A549 (cell line): ENCODE measurements at regions of chr2 and their contacts with region 1.

Region 1: GRCh38 chr2:128062571-128062970 is 28.4 kb upstream of the UGGT1 start:
- DNase-seq: no peak
- ATAC-seq: no peak
- H3K4me3 ChIP-seq: no peak overlapping the region
- H3K27ac ChIP-seq: no peak overlapping the region
- H3K4me1 ChIP-seq: no peaks in the 10 kb centered on the region
- CTCF ChIP-seq: no peak
- EP300 ChIP-seq: no peak
- POLR2A ChIP-seq: no peak
- RAD21 ChIP-seq: no peak

Region 2: GRCh38 chr2:128076461-128077106 is 14.0 kb after region 1 on chr2:
- CTCF ChIA-PET with region 1: interaction called, 27 read pairs
- POLR2A ChIA-PET with region 1: no interaction called
- DNase-seq: no peak
- ATAC-seq: peak in 1 of 2 experiments; percentile 47; a peak in 2 of 6 replicates
- H3K4me3 ChIP-seq: no peak overlapping the region
- H3K27ac ChIP-seq: no peak overlapping the region
- H3K4me1 ChIP-seq: no peaks in the 10 kb centered on the region
- CTCF ChIP-seq: no peak
- EP300 ChIP-seq: no peak
- POLR2A ChIP-seq: no peak
- RAD21 ChIP-seq: no peak

Region 3: DNA sequence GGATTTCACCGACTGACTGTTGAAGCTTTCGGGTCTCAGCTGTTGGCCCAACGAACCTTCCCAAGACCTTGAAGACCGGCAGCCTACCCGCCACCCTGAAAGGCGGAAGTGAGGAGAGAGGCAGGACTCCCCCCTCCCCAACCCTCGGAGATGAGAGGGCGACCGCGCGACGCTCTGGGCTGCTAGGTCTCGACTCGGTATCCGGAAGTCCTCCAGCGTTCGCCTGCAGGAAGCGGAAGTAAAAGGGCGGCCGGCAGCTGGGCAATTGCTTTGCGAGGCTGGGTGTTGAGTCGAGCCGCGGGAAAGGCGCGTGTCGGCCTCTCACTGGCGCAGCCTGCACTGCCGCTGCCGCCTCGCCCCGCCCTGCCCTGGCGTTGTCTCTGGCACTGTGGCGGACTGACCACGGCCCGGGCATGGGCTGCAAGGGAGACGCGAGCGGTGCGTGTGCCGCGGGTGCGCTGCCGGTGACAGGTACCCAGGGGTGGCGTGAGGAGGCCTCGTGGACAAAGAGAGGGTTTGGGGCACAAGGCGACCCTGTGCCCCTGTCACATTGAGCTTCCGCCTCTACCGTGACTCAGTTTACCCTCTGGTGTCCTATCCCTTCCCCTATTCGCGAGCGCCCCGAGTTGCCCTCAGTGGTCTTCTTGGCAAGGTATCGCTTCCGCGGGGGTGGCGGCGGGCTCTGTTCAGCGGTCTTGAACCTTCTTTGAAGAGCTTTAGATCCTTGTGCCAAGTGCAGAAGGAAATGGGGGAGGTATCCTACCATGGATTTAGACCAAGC is 28.6 kb after region 1 on chr2 and contains the start of gene UGGT1:
- CTCF ChIA-PET with region 1: interaction called, 18 read pairs
- POLR2A ChIA-PET with region 1: interaction called, 3 read pairs
- DNase-seq: peak; percentile 83 to 99
- ATAC-seq: peak; percentile 98 to 99
- H3K4me3 ChIP-seq: peak within 1 kb of the TSS; percentile 63
- H3K27ac ChIP-seq: peak within 1 kb of the TSS; percentile 89 to 90
- H3K4me1 ChIP-seq: peaks cover 13% of the 10 kb centered on the region; the same call in 2 of the 3 replicates
- CTCF ChIP-seq: no peak
- EP300 ChIP-seq: no peak
- POLR2A ChIP-seq: peak; percentile 76
- RAD21 ChIP-seq: no peak
- polyA plus RNA-seq, gene UGGT1: 52.2 and 56.4 TPM in 2 replicates

Region 4: DNA sequence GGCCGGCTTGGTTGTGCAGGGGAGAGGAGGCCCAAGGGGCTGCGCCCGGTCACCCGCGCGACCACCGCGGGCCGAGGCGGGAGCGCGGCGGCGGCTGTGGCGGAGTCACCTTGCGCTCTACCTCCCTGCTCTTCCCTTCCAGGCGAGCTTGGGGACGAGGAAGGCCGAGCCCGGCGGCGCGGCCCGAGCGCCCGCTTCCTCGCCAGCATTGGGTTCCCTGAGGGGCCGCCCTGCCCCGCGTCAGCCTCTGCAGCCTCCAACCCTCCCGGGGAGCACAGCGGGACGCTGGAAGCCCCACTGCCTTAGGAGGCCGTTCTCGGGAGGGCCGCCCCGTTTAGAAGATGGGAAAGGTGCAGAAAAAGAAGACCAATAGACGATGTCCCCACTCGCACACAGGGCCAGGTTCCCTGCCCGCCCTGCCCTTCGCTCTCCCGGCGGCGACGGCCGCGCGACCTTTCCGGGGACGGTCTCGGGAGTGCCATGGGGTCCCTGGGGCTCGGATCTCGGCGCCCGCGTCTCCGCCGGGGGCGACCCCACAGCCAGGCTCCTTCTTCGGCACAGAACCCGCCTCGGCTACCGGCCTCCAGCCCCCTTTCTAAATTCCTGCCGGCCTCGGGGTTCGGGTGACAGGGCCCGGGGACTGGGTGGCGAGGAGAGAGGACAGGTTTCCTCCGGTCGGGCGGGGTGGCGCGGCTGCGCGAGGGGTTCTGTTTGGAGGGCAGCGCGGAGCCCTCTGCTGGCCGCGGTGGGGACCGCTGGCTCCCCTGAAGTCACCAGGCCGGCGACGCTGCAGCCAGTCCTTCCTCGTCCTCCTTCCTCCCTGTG is 170.6 kb after region 1 on chr2:
- CTCF ChIA-PET with region 1: interaction called, 35 read pairs
- POLR2A ChIA-PET with region 1: no interaction called
- DNase-seq: peak; percentile 82 to 89
- ATAC-seq: peak; percentile 96 to 97
- H3K4me3 ChIP-seq: peak overlapping the region; percentile 68
- H3K27ac ChIP-seq: peak overlapping the region; percentile 72 to 84
- H3K4me1 ChIP-seq: 0 out of 3 replicates have a peak, but pooled peaks cover 4% of the 10 kb centered on the region
- CTCF ChIP-seq: peak; percentile 68
- EP300 ChIP-seq: no peak
- POLR2A ChIP-seq: 0 out of 2 replicates have a peak, but pooled peaks have one; percentile 13
- RAD21 ChIP-seq: peak; percentile 54 to 66

Region 5: GRCh38 chr2:128305159-128306087 is 242.9 kb after region 1 on chr2:
- CTCF ChIA-PET with region 1: interaction called, 12 read pairs
- POLR2A ChIA-PET with region 1: no interaction called
- DNase-seq: peak in 1 of 2 experiments; percentile 81
- ATAC-seq: peak; percentile 35 to 57
- H3K4me3 ChIP-seq: no peak overlapping the region
- H3K27ac ChIP-seq: peak overlapping the region; percentile 73 to 83
- H3K4me1 ChIP-seq: peaks cover 41% of the 10 kb centered on the region
- CTCF ChIP-seq: no peak
- EP300 ChIP-seq: no peak
- POLR2A ChIP-seq: no peak
- RAD21 ChIP-seq: no peak